ENCODE measurements at regions of chr19 and their contacts with region 1.

Region 1: GRCh38 chr19:48784540-48784939 is 26.3 kb downstream of the BCAT2 start:
- DNase-seq: no peak
- H3K4me3 Mint-ChIP-seq: no peak overlapping the region
- H3K27ac Mint-ChIP-seq: no peak overlapping the region
- H3K4me1 Mint-ChIP-seq: peaks cover 5% of the 10 kb centered on the region
- H3K27me3 Mint-ChIP-seq: peaks cover 2% of the 10 kb centered on the region

Region 2: DNA sequence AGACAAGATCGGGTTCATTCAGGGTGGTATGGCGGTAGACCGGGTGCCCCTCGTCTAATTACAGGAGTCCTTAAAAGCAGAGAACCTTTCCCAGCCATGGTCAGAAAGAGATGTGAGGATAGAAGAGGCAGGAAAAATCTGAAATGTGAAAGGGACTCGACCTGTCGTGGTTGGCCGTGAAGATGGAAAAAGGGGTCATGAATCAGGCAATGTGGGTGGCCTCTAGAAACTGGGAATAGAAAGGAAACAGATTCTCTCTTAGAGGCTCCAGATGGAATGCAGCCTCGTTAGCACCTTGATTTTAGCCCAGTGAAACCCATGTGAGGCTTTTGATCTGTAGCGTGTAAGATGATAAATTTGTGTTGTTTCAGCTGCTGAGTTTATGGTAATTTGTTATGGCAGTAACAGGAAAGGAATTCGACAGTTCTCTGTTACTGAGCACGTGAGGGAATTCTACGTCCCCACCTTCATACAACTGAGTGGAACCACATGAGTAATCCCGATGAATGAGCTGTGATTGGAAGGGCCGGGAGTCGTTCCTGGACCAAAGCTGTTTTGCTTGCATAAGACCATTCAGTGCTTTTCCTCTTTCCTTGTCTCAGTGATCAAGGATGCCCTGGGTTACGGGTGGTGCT is 127.6 kb before region 1 on chr19:
- CTCF ChIA-PET with region 1: no interaction called
- POLR2A ChIA-PET with region 1: no interaction called
- DNase-seq: no peak
- H3K4me3 Mint-ChIP-seq: no peak overlapping the region
- H3K27ac Mint-ChIP-seq: no peak overlapping the region
- H3K4me1 Mint-ChIP-seq: peaks cover 30% of the 10 kb centered on the region
- H3K27me3 Mint-ChIP-seq: peaks cover 6% of the 10 kb centered on the region

Region 3: DNA sequence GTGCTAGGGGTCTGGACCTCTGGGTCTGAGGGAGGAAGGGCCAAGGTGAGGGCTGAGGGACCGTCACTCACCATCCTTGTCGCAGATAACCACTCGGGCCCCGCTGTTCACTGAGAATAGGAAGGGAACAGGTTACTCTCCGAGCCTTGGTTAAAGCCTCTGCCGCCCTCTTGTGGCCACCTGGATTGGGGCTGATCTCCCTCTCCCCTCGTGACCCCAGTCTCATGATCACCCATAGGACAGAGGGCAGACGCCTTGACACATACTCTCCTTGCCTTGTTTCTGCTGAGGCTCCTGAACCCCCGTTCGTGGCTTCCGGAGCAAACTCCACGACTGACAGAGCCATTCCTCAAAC is 51.2 kb after region 1 on chr19:
- CTCF ChIA-PET with region 1: interaction called, 51 read pairs
- POLR2A ChIA-PET with region 1: no interaction called
- DNase-seq: peak; percentile 95
- H3K4me3 Mint-ChIP-seq: peak overlapping the region; percentile 71
- H3K27ac Mint-ChIP-seq: peak overlapping the region; percentile 83
- H3K4me1 Mint-ChIP-seq: peaks cover 25% of the 10 kb centered on the region
- H3K27me3 Mint-ChIP-seq: peaks cover 4% of the 10 kb centered on the region